Ascending aorta (tissue), 2 donors: ENCODE measurements at regions of chr18 and their contacts with region 1.

Region 1: DNA sequence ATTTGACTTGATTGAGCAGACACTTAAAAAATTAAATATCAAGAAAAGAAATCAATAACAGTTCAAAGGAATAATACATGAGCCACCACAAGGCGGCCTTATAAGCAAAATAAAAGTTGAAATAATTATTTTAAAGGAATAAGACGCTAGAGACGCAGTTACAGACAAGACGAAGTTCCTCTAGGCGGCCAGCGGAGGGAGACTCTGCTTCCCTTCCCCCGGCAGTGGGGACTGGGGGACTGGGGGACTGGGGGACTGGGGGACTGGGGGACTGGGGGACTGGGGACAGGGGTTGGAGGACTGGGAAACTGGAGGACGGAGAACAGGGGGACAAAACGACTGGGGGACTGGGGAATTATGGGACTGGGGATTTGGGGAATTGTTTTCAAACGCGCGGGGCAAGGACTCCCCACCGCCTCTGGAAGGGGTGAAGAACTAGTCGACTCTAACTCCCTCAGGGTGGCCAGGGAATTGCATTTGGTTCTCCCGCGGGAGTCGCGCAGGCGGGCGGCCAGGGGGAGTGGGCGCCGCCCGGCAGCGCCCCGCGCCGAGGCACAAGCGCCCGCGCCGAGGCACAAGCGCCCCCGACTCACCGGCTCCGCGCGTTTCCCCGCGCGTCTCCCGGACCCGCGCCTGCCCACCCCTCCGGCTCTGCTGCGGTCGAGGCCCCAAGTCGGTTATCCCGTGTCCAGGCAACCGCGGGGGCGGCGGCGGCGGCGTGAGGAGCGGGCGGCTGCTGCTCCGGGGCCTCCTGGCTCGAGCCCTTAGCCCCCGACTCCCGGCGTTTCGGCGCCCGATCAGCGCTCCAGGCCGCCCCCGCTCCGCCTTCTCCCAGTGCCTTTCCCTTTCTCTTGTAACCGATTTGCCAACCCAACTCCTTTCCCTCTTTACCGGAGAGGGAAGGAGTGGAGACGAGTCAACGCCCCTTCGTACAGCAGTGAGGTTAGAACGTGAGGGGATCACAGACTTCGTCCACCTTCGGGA is at the start of gene CCDC178:
- DNase-seq: no peak
- H3K4me3 ChIP-seq: peak within 1 kb of the TSS; percentile 65 to 88
- H3K27ac ChIP-seq: peak within 1 kb of the TSS in 1 of 2 donors; percentile 47
- H3K4me1 ChIP-seq: no peaks in the 10 kb centered on the region
- H3K27me3 ChIP-seq: no peaks in the 10 kb centered on the region
- CTCF ChIP-seq: peak in 2 of 3 experiments; percentile 53 to 56
- total RNA-seq, gene CCDC178: not detected

Region 2: GRCh38 chr18:33495278-33495677 is 54.9 kb after region 1 on chr18:
- intact Hi-C with region 1: loop called (anchors 1 kb)
- DNase-seq: no peak
- H3K4me3 ChIP-seq: no peak overlapping the region
- H3K27ac ChIP-seq: no peak overlapping the region
- H3K4me1 ChIP-seq: no peaks in the 10 kb centered on the region
- H3K27me3 ChIP-seq: no peaks in the 10 kb centered on the region
- CTCF ChIP-seq: peak in 1 of 3 experiments; percentile 36

Region 3: GRCh38 chr18:33761363-33761762 is 321.0 kb after region 1 on chr18:
- intact Hi-C with region 1: loop called (anchors 5 kb)
- DNase-seq: no peak
- H3K4me3 ChIP-seq: no peak overlapping the region
- H3K27ac ChIP-seq: no peak overlapping the region
- H3K4me1 ChIP-seq: no peaks in the 10 kb centered on the region
- H3K27me3 ChIP-seq: no peaks in the 10 kb centered on the region
- CTCF ChIP-seq: peak in 2 of 3 experiments; percentile 14 to 26